Left ventricle myocardium superior (tissue), 1 donor: ENCODE measurements at regions of chr20 and their contacts with region 1.

Region 1: GRCh38 chr20:40990542-40991120 is 38.0 kb upstream of the TOP1 start:
- DNase-seq: peak; percentile 77
- ATAC-seq: peak; percentile 99

Region 2: DNA sequence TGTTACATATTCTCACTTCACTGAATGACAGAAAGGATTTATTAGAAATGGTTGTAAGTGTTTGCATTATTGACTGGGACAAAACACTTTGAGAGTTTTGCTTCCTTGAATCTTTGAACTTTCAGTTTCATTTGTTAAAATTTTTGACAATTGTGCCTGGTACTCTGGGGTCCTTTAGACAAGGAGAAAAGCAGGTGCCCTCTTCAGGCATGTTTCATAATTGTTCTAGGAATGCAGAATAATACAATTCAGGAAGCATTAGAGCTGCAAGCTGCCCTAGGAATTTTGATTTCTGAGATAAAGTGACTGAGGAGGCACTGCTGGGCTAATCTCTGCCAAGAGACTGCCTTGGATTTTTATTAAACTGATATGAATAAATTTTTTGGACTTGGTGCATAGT is 87.7 kb after region 1 on chr20:
- intact Hi-C with region 1: loop called (anchors 2 kb)
- DNase-seq: no peak
- ATAC-seq: peak; percentile 77

Region 3: DNA sequence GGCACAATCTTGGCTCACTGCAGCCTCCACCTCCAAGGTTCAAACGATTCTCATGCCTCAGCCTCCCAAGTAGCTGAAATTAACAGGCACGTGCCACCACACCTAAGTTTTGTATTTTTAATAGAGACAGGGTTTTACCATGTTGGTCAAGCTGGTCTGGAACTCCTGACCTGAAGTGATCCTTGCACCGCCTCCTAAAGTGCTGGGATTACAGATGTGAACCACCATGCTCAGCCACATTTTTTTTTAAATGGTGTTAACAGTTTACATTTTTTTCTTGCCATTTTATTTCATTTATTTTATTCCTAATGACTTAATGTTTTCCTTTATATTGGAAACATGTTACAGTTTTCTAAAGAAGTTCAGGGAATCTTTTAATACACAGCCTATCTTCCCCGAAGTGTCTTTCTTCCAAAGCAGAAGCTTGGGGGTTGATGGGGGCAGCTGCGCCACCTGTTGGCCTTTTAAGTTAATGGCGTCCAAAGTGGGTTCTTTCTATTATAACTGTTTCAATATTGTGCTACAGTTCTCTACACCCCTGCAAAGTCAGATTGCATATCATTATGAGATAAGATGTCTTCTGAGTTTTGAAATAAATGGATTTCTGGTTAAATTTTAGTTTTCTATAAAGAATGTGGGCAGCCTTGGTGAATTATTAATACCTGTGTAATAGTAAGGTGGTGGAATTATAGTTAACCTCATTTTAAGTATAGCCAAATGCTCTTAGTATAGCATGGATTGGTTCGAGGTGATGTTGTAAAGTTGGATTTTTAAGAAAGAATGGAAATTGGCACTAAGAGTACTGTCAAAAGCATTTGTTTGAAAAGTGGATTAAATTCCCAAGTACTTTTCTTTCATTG is 104.7 kb after region 1 on chr20:
- intact Hi-C with region 1: loop called (anchors 5 kb)
- DNase-seq: peak; percentile 67
- ATAC-seq: peak; percentile 79